Panc1 (cell line): ENCODE measurements at regions of chr6 and their contacts with region 1.

Region 1: DNA sequence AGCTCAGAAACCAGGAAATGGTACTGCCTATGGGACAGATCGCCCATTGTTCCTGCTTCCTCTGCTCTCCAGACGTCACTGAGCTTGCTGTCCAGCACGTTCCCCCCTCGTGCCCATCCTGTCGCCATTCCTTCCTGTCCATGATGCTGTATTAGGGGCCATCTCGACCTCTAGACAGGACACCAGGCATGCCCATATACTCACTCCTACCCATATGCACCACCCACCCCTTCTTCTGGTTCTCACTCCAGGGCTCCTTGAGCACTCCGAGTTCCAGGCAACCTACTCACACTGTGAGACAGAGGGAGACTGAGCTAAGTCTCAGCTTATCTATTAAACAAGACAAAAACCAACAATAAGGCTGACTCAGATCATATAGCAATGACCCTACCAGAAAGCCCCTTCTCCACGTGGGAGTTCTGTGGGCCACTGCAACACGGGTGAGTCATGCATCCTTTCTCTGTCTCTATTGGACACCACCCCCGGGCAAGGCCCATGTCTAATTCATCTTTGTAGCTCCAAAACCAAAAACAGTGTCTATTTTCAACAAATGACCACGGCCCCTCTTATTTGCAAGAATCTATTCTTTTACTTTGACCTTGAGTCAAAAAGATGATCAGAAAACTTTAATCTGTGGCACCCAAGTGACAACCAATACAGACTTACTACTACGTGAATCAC is 65.7 kb downstream of the PSMG4 start:
- DNase-seq: no peak
- ATAC-seq: peak; percentile 70
- H3K4me3 ChIP-seq: no peak overlapping the region
- H3K27ac ChIP-seq: no peak overlapping the region
- H3K4me1 ChIP-seq: peaks cover 5% of the 10 kb centered on the region; the same call in 1 of the 2 replicates
- H3K27me3 ChIP-seq: no peaks in the 10 kb centered on the region
- CTCF ChIP-seq: no peak

Region 2: GRCh38 chr6:2921520-2922115 is 402.8 kb before region 1 on chr6:
- CTCF ChIA-PET with region 1: no interaction called
- POLR2A ChIA-PET with region 1: interaction called, 11 read pairs
- in situ Hi-C with region 1: no loop called
- intact Hi-C with region 1: no loop called
- DNase-seq: no peak
- ATAC-seq: no peak
- H3K4me3 ChIP-seq: no peak overlapping the region
- H3K27ac ChIP-seq: no peak overlapping the region
- H3K4me1 ChIP-seq: no peaks in the 10 kb centered on the region; the same call in 1 of the 2 replicates
- H3K27me3 ChIP-seq: no peaks in the 10 kb centered on the region
- CTCF ChIP-seq: no peak

Region 3: GRCh38 chr6:3281631-3282475 is 42.5 kb before region 1 on chr6:
- CTCF ChIA-PET with region 1: no interaction called
- POLR2A ChIA-PET with region 1: no interaction called
- in situ Hi-C with region 1: no loop called
- intact Hi-C with region 1: no loop called
- DNase-seq: no peak
- ATAC-seq: no peak
- H3K4me3 ChIP-seq: no peak overlapping the region
- H3K27ac ChIP-seq: no peak overlapping the region
- H3K4me1 ChIP-seq: no peaks in the 10 kb centered on the region
- H3K27me3 ChIP-seq: no peaks in the 10 kb centered on the region
- CTCF ChIP-seq: no peak